Naive thymus-derived CD4-positive, alpha-beta T cell (primary cell): ENCODE measurements at regions of chr7 and their contacts with region 1.

Region 1: GRCh38 chr7:64902806-64903721 is at the start of gene ZNF273:
- DNase-seq: peak; percentile 72 to 94 (median 90)
- ATAC-seq: peak; percentile 100
- H3K4me3 ChIP-seq: peak within 1 kb of the TSS; percentile 95
- H3K4me3 Mint-ChIP-seq: peak within 1 kb of the TSS; percentile 95 to 98 (median 95)
- H3K27ac ChIP-seq: peak within 1 kb of the TSS; percentile 83
- H3K27ac Mint-ChIP-seq: peak within 1 kb of the TSS; percentile 92 to 97 (median 95)
- H3K4me1 ChIP-seq: peaks cover 7 to 14% of the 10 kb centered on the region in 2 donors
- H3K4me1 Mint-ChIP-seq: peaks cover 36 to 55% (median 50%) of the 10 kb centered on the region in 7 donors
- H3K27me3 ChIP-seq: no peaks in the 10 kb centered on the region
- H3K27me3 Mint-ChIP-seq: no peaks in the 10 kb centered on the region
- total RNA-seq, gene ZNF273: 3.8 to 10.9 (median 7.5) TPM

Region 2: GRCh38 chr7:63900394-63901203 is 1002.5 kb before region 1 on chr7:
- CTCF ChIA-PET with region 1: no interaction called
- POLR2A ChIA-PET with region 1: no interaction called
- intact Hi-C with region 1: loop called in 1 of 2 experiments (anchors 1 kb)
- DNase-seq: peak; percentile 64 to 95 (median 91)
- ATAC-seq: peak; percentile 97
- H3K4me3 ChIP-seq: peak overlapping the region; percentile 84
- H3K4me3 Mint-ChIP-seq: peak overlapping the region; percentile 82 to 100 (median 98)
- H3K27ac ChIP-seq: peak overlapping the region; percentile 89
- H3K27ac Mint-ChIP-seq: peak overlapping the region; percentile 88 to 99 (median 95)
- H3K4me1 ChIP-seq: no peaks in the 10 kb centered on the region
- H3K4me1 Mint-ChIP-seq: peaks cover 0 to 22% (median 9%) of the 10 kb centered on the region in 7 donors
- H3K27me3 ChIP-seq: no peaks in the 10 kb centered on the region
- H3K27me3 Mint-ChIP-seq: peaks cover 0 to 4% (median 0%) of the 10 kb centered on the region in 5 donors

Region 3: GRCh38 chr7:64307254-64308015 is 595.6 kb before region 1 on chr7:
- CTCF ChIA-PET with region 1: no interaction called
- POLR2A ChIA-PET with region 1: interaction called, 7 read pairs
- intact Hi-C with region 1: loop called (anchors 1 to 2 kb)
- DNase-seq: peak; percentile 76 to 95 (median 93)
- ATAC-seq: peak; percentile 99
- H3K4me3 ChIP-seq: peak overlapping the region; percentile 95
- H3K4me3 Mint-ChIP-seq: peak overlapping the region; percentile 90 to 100 (median 96)
- H3K27ac ChIP-seq: peak overlapping the region; percentile 83
- H3K27ac Mint-ChIP-seq: peak overlapping the region; percentile 94 to 99 (median 97)
- H3K4me1 ChIP-seq: peaks cover 0 to 13% of the 10 kb centered on the region in 2 donors
- H3K4me1 Mint-ChIP-seq: peaks cover 13 to 30% (median 19%) of the 10 kb centered on the region in 7 donors
- H3K27me3 ChIP-seq: no peaks in the 10 kb centered on the region
- H3K27me3 Mint-ChIP-seq: no peaks in the 10 kb centered on the region

Region 4: DNA sequence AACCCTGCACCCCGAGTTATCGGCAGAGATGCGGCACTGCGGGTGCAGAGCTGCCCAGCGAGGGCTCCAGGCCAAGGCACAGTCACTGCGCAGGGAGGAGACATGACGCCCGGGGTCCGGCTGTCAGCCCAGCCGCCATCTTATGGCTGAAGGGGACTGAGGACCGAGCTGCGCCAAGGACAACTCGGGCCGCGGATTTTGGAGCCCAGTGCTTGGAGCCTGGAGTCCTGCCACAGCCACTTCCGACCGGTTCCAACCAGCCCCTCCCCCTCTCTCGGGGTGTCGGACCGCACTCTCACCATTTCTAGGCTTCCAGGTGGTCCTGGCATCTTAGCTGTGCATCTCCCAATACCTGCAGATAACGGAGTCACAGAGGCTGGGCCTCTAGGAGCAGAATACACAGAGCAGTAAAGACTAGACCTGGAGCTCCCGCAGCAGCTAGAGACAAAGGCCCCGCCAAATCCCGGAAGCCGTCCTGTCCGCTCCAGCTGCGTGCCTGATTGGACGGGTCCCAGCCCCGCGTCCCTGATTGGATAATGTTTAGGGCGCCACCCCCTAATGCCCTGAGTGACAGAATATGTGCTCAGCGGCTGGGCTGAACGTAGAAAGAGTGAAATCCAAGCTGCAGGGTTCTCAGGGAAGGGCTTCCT is 340.3 kb before region 1 on chr7 and contains the start of gene ZNF680:
- CTCF ChIA-PET with region 1: no interaction called
- POLR2A ChIA-PET with region 1: no interaction called
- intact Hi-C with region 1: loop called (anchors 1 to 2 kb)
- DNase-seq: peak; percentile 64 to 93 (median 88)
- ATAC-seq: peak; percentile 99
- H3K4me3 ChIP-seq: peak within 1 kb of the TSS; percentile 95
- H3K4me3 Mint-ChIP-seq: peak within 1 kb of the TSS; percentile 93 to 100 (median 99)
- H3K27ac ChIP-seq: peak within 1 kb of the TSS; percentile 67
- H3K27ac Mint-ChIP-seq: peak within 1 kb of the TSS; percentile 89 to 98 (median 97)
- H3K4me1 ChIP-seq: no peaks in the 10 kb centered on the region
- H3K4me1 Mint-ChIP-seq: peaks cover 14 to 41% (median 35%) of the 10 kb centered on the region in 7 donors
- H3K27me3 ChIP-seq: no peaks in the 10 kb centered on the region
- H3K27me3 Mint-ChIP-seq: no peaks in the 10 kb centered on the region
- total RNA-seq, gene ZNF680: 10.0 to 20.4 (median 12.0) TPM

Region 5: DNA sequence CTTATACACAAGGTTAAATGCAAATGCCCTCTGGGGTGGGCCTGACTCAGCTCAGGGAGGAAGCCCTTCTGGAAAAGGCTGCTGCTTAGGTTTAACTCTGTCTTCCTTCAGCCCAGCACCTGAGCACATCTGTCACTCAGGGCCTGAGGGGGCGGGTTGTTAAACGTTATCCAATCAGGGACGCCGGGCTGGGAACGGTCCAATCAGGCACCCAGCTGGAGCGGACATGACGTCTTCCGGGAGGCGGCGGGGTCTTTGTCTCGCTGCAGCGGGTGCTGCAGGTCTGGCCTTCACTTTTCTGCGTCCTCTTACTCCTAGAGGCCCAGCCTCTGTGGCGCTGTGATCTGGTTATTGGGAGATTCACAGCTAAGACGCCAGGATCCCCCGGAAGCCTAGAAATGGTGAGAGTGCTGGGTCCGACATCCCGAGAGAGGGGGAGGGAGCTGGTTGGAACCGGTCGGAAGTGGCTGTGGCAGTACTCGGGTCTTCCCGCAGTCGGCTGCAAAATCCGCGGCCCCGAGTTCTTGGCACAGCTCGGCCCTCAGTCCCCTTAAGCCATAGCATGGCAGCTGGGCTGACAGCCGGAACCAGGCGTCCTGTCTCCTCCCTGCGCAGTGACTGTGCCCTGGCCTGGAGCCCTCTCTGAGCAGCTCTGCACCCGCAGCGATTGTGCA is 108.8 kb before region 1 on chr7 and contains the start of gene ZNF138:
- CTCF ChIA-PET with region 1: no interaction called
- POLR2A ChIA-PET with region 1: interaction called, 30 read pairs
- intact Hi-C with region 1: loop called (anchors 1 kb)
- DNase-seq: peak; percentile 76 to 96 (median 94)
- ATAC-seq: peak; percentile 100
- H3K4me3 ChIP-seq: peak within 1 kb of the TSS; percentile 92
- H3K4me3 Mint-ChIP-seq: peak within 1 kb of the TSS; percentile 92 to 99 (median 98)
- H3K27ac ChIP-seq: peak within 1 kb of the TSS; percentile 83
- H3K27ac Mint-ChIP-seq: peak within 1 kb of the TSS; percentile 91 to 99 (median 98)
- H3K4me1 ChIP-seq: peaks cover 9 to 17% of the 10 kb centered on the region in 2 donors
- H3K4me1 Mint-ChIP-seq: peaks cover 18 to 56% (median 44%) of the 10 kb centered on the region in 7 donors
- H3K27me3 ChIP-seq: no peaks in the 10 kb centered on the region
- H3K27me3 Mint-ChIP-seq: no peaks in the 10 kb centered on the region
- total RNA-seq, gene ZNF138: 8.8 to 19.0 (median 10.6) TPM

Region 6: DNA sequence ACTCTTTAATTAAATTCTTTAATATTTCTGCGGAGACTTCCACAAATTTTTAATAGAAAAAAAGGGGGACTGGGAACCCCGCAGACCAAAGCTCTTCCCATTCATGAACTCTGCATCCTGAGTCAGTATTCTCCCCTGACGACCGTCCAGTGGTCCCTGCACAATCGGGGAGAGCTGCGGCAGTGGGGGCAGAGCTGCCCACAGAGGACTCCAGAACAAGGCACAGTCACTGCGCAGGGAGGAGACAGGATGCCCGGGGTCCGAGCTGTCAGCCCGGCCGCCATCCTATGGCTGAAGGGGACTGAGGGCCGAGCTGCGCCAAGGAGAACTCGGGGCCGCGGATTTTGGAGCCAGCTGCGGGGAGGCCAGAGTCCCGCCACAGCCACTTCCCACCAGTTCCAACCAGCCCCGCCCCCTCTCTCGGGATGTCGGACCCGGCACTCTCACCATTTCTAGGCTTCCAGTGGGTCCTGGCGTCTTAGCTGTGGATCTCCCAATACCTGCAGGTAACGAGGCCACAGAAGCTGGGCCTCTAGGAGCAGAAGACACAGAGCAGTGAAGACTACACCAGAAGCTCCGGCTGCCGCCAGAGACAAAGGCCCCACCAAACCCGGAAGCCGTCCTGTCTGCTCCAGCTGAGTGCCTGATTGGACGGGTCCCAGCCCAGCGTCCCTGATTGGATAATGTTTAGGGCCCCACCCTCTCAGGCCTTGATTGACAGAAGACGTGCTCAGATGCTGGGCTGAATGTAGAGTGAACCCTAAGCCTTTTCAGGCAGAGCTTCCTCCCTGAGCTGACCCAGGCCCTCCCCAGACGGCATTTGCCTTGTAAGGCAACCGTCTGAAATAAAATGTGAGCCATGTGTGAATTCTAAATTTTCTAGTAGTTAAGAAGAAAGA is 103.3 kb after region 1 on chr7 and contains the start of gene ERV3-1:
- CTCF ChIA-PET with region 1: no interaction called
- POLR2A ChIA-PET with region 1: interaction called, 20 read pairs
- intact Hi-C with region 1: loop called (anchors 1 kb)
- DNase-seq: peak; percentile 76 to 96 (median 93)
- ATAC-seq: peak; percentile 99
- H3K4me3 ChIP-seq: peak within 1 kb of the TSS; percentile 72
- H3K4me3 Mint-ChIP-seq: peak within 1 kb of the TSS; percentile 75 to 96 (median 94)
- H3K27ac ChIP-seq: peak within 1 kb of the TSS; percentile 81
- H3K27ac Mint-ChIP-seq: peak within 1 kb of the TSS; percentile 73 to 98 (median 94)
- H3K4me1 ChIP-seq: peaks cover 4 to 21% of the 10 kb centered on the region in 2 donors
- H3K4me1 Mint-ChIP-seq: peaks cover 26 to 57% (median 45%) of the 10 kb centered on the region in 7 donors
- H3K27me3 ChIP-seq: no peaks in the 10 kb centered on the region
- H3K27me3 Mint-ChIP-seq: no peaks in the 10 kb centered on the region
- total RNA-seq, gene ERV3-1: 12.2 to 22.9 (median 14.9) TPM

Region 7: GRCh38 chr7:65373608-65374351 is 470.7 kb after region 1 on chr7 and contains the start of gene ZNF92:
- CTCF ChIA-PET with region 1: no interaction called
- POLR2A ChIA-PET with region 1: interaction called, 3 read pairs
- intact Hi-C with region 1: loop called (anchors 2 kb)
- DNase-seq: peak; percentile 84 to 95 (median 94)
- ATAC-seq: peak; percentile 99
- H3K4me3 ChIP-seq: peak within 1 kb of the TSS; percentile 87
- H3K4me3 Mint-ChIP-seq: peak within 1 kb of the TSS; percentile 90 to 98 (median 96)
- H3K27ac ChIP-seq: peak within 1 kb of the TSS; percentile 82
- H3K27ac Mint-ChIP-seq: peak within 1 kb of the TSS; percentile 87 to 96 (median 93)
- H3K4me1 ChIP-seq: peaks cover 8 to 21% of the 10 kb centered on the region in 2 donors
- H3K4me1 Mint-ChIP-seq: peaks cover 18 to 57% (median 49%) of the 10 kb centered on the region in 7 donors
- H3K27me3 ChIP-seq: no peaks in the 10 kb centered on the region
- H3K27me3 Mint-ChIP-seq: no peaks in the 10 kb centered on the region
- total RNA-seq, gene ZNF92: 16.3 to 22.5 (median 19.3) TPM